ENCODE measurements at regions of chr10 and their contacts with region 1.

Region 1: DNA sequence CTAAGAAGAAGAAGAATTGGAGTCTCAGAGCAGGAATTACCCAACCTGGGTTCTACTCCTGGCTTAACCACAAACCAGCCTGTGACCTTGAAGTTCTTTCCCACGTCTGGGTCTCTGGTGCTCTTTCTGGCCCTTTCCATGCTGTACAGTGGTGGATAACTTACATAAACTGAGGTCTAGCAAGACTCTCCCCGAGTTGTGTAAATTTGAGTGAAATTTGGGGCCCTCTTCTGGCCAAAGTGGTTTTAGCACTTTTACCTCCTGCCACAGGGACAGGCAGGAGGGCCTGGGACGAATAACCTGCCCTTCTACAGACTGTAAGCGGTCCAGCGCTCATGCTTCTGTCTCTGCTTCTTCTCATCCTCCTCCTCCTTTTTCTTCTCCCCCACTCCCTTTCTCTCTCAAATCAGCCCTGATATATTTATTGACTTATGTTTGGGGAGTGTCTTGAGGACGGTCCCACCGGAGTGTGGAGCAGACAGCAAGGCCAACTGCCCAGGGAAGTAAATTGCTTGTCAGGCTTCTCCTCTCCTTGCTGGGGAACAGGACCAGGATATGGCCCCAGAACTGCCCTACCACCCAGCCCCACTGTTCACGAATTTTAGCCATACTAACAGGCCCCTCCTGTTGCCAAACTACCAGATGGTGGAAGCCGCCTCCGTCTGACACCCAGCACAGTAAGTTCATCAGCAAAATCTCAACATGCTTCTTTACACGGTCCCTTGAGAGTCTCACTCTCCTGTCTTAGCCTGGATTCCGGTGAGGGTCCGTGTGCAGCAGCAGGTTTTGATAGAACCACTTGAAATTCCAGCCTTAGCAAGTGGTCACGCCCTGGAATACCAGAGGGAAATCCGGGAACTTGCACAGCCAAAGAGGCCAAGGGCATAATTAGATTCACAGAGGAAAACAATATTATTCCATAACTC is 4.0 kb upstream of the SH3PXD2A start:
- DNase-seq: peak in 5 of 10 donors; percentile 63 to 87 (median 72)

Region 2: DNA sequence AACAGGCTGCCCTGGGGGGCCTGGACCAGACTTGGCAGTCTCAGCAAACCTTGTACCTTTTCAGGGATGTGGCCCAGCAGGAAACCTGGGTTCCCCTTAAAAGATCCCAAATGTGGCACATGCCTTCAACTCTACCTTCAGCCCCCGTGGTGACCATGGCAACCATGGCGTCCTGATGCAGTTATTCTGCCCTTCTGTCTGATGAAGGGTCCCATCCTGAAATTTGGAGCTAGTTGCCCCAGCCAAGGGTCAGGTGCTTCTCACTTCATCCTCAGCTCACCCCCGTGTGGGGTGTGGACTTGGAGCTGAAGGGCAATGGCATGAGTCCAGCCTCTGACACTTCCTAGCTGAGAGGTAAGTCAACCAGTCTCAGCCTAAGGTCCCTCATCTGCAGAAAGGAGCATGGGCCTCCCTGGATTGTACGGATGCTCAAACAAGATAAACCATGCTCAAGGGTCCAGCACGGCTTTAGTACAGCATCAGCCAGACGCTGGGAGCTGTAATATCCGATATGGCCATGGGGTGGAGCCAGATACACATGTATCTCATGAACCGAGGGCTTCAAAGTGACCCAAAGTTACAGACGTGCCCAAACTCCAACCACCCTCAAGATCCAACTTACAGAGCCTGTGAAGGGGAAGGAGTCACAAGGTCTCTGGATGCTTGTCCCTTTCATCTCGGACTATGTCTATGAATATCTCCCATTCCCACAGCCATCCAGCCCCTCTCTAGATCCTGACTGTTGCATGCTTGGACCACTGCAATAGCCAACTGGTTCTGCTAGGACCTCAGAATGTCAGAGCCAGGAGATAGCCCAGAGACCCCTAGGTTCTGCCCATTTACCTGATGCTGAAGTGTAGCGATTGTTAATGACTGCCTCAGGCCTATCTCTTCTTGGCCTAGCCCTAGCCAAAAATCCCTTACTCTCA is 146.6 kb before region 1 on chr10:
- intact Hi-C with region 1: loop called (anchors 1 kb)
- DNase-seq: peak; percentile 69 to 98 (median 89)

Region 3: GRCh38 chr10:104424719-104425118 is 565.3 kb after region 1 on chr10:
- intact Hi-C with region 1: no loop called
- DNase-seq: no peak

Measured in posterior cingulate gyrus (tissue), 11 donors.